Left cardiac atrium (tissue), 4 donors: ENCODE measurements at regions of chr2 and their contacts with region 1.

Region 1: DNA sequence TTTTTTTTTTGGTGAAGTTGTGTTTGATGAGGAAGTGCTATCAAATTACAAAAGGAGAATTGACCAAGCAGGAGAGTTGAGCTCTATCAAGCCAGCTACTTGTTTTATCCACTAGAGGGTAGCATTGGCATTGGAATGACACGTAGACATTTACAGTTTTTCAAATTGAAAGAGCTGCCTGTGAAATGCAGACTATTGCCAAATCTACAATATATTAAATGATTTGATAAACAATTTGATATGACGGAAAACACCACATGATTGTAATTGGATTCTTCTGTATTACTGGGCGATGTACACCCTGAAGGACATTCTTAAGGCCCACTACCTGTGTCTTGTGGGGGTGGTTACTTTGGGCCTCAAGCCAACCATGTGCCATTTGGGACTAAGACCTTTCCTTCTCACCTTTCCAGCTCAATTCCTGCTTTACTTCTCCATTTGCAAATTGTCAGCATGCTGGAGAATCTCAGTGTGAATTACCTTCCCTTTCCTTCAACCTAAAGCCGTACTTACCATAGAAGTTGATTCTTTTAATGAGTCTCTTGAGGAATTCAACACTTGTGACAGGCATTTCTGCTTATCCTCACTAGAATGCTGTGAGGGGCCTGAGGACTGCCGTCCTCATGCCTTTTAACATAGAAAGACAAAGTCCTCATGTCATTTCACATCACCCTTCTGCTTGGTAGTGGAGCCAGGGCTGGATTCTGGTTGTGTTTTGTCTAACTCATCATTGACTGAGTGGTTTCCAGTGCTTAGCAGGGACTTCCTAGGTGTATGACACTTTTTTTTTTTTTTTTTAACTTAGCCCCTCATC is 134.8 kb upstream of the THUMPD2 start:
- DNase-seq: no peak
- ATAC-seq: peak; percentile 66 to 78

Region 2: GRCh38 chr2:39024833-39025232 is 889.0 kb before region 1 on chr2:
- intact Hi-C with region 1: no loop called
- DNase-seq: no peak
- ATAC-seq: no peak

Region 3: DNA sequence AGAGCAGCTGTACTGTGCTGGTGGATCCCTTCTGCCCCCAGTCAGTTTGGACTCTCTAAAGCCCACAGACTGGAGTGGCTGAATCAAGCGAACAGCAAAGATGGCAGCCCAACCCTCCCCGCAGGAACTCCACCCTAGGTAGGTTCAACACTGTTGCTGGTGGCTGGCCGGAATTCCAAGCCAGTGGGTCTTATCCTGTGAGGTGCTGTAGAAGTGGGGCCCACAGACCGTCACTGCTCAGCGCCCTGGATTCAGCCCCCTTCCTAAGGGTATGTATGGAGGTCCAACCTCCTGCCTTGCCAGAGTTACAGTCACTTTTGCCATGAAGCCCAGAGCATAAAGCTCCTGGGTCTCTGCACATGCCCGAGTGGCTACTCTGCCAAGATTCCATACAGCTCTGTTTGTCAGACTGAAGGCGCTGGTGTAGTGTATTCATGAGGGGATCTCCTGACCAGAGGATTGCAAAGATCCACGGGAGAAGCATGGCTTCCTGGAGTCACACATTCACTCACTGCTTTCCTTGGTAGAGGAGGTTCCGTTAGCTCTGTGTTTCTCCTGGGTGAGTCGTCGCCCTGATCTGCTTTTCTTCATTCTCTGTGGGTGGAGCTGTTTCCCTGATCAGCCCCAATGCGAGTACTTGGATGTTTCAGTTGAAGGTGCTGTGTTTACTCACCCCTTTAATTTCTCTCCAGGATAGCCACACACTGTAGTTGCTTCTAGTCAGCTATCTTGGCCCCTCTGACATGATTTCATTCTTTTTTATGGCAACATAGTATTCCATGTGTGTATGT is 158.8 kb after region 1 on chr2:
- intact Hi-C with region 1: no loop called
- DNase-seq: no peak
- ATAC-seq: no peak

Region 4: GRCh38 chr2:40554668-40555285 is 640.9 kb after region 1 on chr2:
- intact Hi-C with region 1: loop called (anchors 1 to 5 kb)
- DNase-seq: peak; percentile 65
- ATAC-seq: peak; percentile 78 to 90

Region 5: GRCh38 chr2:40760071-40760666 is 846.3 kb after region 1 on chr2:
- intact Hi-C with region 1: loop called in 1 of 2 experiments (anchors 5 kb)
- DNase-seq: no peak
- ATAC-seq: peak; percentile 49 to 61

Region 6: DNA sequence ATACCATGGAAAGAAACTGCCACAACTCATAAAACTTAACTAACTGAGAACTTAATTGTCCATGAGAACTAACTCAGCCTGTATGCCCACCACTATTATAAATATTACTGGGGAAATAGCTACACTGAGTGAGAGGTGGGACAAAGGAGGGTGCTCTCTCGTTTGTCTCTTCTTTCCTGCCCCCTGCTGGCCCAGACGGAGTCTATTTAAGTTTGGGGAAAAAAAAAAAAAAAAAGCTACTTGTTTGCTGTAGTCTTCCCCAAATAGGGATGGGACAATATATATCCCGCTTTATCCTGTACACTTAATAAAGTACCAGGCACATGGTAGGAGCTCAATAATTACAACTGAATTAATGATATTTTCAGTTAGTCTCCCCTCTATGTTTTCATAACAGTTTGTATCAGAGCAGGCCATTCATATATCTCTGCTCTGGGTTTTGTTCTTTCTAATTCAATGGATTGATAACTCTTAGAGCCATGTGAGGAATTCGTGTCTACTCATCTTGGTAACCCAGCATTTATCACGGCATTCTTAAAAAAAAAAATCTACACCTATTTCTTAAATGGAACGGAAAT is 1486.3 kb after region 1 on chr2:
- intact Hi-C with region 1: loop called in 1 of 2 experiments (anchors 5 kb)
- DNase-seq: no peak
- ATAC-seq: no peak

Region 7: GRCh38 chr2:41698678-41699422 is 1785.0 kb after region 1 on chr2:
- intact Hi-C with region 1: loop called in 1 of 2 experiments (anchors 10 kb)
- DNase-seq: peak; percentile 49
- ATAC-seq: peak; percentile 41 to 65

Region 8: DNA sequence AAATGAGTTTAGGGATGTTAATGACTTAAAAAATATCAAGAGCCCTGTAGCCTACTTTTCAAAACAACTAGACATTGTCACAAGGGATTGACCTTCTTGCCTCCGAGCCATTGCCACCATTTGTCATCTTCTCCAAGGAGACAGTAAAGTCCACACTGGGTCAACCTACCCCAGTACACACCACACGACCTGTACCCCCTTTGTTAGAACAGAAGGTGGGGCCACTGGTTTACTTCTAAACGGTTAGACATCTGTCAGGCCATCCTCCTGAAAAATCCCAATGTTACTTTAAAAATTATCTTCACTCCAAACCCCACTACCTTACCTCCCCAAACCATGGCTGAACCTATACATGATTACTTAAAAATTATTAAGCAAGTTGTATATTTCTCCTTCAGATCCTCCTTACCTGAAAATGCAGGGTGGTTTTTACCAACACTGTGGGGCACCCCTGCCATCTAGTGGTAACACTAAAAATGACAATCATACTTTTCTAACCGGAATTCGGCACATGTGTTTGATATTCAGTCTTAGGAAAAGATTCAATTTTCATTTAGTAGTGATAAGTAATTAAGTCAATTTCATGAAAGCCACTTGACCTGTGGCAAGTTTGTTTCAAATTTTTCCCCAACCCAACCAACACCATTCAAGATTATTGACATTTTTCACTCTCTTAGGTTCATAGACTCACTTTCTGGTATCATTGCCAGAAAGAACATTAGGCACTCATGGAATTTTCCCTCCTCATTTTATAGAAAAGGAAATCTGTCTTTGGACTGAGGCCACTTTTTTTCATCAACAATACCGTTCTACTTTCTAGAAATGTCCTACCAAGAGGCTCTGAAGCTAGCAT is 1868.7 kb after region 1 on chr2:
- intact Hi-C with region 1: loop called in 1 of 2 experiments (anchors 5 kb)
- DNase-seq: no peak
- ATAC-seq: peak in 1 of 2 donors; percentile 23